MCF 10A (cell line): ENCODE measurements at regions of chr1 and their contacts with region 1.

Region 1: GRCh38 chr1:151728151-151729054 is 7.1 kb downstream of the RIIAD1 start:
- DNase-seq: no peak
- H3K4me3 Mint-ChIP-seq: no peak overlapping the region
- H3K27ac Mint-ChIP-seq: no peak overlapping the region
- H3K4me1 Mint-ChIP-seq: no peaks in the 10 kb centered on the region
- H3K27me3 Mint-ChIP-seq: peaks cover 27% of the 10 kb centered on the region
- CTCF ChIP-seq: no peak

Region 2: DNA sequence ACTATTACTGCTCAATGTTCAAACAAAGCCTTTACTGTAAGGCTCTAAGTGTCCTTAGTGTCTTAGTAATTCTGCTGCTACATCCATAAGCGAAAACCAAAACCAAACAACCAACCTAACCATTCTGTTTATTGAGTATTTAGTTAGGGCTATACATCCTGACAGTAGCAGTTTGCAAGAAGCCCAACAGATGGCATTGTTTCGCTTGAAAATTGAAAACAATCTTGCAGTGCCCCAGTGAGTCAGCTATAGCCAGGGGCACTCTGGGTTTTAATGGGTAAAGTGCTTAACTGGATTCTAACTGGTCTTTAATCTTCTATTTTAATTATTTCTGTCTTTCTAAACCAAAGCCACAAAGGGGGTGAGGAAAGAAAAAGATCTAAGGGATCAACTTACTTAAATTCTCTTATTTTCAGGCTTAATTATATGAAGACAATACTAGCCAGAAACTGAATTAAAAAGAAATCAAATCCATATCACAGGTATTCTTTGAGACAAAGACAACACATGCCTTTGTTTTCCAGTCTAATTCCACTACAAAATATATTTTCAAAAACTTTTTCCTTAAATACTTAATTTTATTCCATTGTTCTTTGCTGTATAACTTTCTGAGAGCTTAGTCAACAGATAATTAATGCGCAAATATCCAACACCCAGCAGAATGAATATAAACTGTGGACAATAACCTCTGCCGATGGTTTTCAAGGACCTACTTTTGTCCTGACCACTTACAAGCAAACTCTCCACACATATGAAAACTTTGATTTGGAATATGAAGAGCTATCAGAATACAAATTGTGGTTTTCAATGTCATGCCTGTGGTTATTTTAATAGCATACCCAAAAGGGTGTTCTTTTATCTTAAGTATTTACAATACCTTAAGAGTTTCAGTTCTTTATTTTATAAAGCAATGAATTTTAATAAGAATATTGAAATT is 284.3 kb before region 1 on chr1:
- CTCF ChIA-PET with region 1: interaction called, 25 read pairs
- POLR2A ChIA-PET with region 1: no interaction called
- intact Hi-C with region 1: no loop called
- DNase-seq: peak; percentile 94
- H3K4me3 Mint-ChIP-seq: no peak overlapping the region
- H3K27ac Mint-ChIP-seq: no peak overlapping the region
- H3K4me1 Mint-ChIP-seq: peaks cover 24% of the 10 kb centered on the region
- H3K27me3 Mint-ChIP-seq: no peaks in the 10 kb centered on the region
- CTCF ChIP-seq: peak; percentile 93

Region 3: DNA sequence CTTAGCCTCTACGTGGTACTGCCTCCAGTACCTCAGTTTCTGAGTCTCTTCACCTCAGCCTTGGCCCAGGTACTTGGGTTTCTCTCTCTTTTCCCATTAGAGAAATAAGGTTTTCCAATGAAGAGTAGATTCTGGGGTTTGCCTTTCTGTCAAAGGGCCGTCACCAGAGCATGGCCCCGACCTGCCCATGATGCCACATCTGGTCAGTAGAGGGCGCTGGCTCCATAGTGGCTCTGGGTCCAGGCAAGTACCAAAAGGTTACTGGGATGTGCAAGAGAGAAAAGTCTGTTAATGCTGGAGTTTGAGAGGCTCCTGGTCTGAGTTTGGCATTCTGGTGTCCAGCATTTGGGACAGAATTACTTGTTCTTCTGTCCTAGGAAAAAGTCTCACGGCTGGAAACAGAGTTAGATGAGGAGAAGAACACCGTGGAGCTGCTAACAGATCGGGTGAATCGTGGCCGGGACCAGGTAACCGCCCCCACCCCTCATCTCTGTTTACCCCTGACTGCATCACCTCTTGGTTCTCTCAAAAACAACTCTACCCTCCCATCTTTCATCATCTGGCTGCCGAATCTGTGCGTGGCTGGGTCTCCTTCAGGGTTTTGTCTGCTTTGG is 193.6 kb before region 1 on chr1:
- CTCF ChIA-PET with region 1: interaction called, 53 read pairs
- POLR2A ChIA-PET with region 1: no interaction called
- intact Hi-C with region 1: no loop called
- DNase-seq: peak; percentile 89
- H3K4me3 Mint-ChIP-seq: no peak overlapping the region
- H3K27ac Mint-ChIP-seq: no peak overlapping the region
- H3K4me1 Mint-ChIP-seq: peaks cover 28% of the 10 kb centered on the region
- H3K27me3 Mint-ChIP-seq: no peaks in the 10 kb centered on the region
- CTCF ChIP-seq: peak; percentile 95

Region 4: DNA sequence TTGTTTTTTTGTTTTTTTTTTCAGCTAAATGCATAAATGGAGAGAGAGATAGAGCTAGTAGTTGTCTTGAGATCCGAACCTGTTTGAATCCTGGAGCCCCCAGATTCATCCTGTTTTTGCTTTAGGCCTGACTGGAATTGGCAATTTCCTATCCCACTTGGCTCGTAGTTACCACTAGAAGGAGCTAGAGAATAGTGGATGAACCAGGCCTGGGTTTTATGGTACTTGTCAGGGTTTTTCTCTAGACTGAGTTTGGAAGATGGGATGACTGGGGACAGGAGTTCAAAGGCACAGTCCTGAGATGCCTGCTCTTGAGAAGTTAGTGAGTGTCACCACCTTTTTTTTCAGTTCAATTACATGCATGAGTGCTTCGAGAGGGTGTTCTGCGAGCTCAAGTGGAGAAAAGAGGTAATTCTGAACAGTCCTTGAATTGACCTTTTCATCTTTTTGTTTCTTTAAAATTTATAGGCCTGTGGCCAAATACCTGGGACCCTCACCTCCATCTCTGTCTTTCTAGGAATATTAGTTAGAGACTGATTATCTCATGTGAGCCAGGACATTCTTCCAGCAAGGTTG is 35.2 kb before region 1 on chr1:
- CTCF ChIA-PET with region 1: interaction called, 37 read pairs
- POLR2A ChIA-PET with region 1: no interaction called
- intact Hi-C with region 1: no loop called
- DNase-seq: peak; percentile 60
- H3K4me3 Mint-ChIP-seq: no peak overlapping the region
- H3K27ac Mint-ChIP-seq: peak overlapping the region; percentile 43
- H3K4me1 Mint-ChIP-seq: no peaks in the 10 kb centered on the region
- H3K27me3 Mint-ChIP-seq: no peaks in the 10 kb centered on the region
- CTCF ChIP-seq: peak; percentile 74

Region 5: DNA sequence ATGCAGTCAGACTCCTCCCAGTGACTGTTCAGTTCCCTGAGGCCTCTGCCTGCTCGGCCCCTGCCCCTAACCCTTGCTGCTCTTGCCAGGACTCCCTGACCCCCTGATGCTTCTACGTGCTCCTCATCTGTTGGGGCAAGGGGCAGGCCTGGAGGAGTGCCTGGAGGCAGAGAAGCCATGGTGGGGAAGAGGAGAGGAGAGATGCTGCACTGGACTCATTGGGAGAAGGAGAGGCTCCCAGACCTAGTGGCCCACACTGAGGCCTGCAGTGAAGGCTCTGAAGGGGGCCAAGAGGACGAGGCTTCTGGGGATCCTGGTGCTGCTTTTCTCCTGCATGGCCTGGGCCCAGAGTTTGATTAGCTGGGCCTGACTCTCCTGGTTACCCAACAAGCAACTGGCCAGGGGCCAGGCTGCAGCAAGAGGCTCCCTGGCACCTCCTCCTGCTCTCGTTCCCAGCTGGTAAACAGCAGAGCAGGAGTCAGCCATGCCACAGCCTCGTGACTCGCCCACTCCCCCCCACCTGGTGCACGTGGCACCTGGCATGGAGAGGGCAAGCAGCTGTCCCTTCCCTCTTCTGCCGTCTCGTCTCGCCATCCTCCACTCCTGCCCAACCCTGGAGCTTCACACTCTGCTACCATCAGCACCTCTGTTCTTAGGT is 104.0 kb after region 1 on chr1:
- CTCF ChIA-PET with region 1: interaction called, 26 read pairs
- POLR2A ChIA-PET with region 1: no interaction called
- intact Hi-C with region 1: no loop called
- DNase-seq: peak; percentile 95
- H3K4me3 Mint-ChIP-seq: peak overlapping the region; percentile 56
- H3K27ac Mint-ChIP-seq: peak overlapping the region; percentile 60
- H3K4me1 Mint-ChIP-seq: peaks cover 67% of the 10 kb centered on the region
- H3K27me3 Mint-ChIP-seq: no peaks in the 10 kb centered on the region
- CTCF ChIP-seq: no peak

Region 6: DNA sequence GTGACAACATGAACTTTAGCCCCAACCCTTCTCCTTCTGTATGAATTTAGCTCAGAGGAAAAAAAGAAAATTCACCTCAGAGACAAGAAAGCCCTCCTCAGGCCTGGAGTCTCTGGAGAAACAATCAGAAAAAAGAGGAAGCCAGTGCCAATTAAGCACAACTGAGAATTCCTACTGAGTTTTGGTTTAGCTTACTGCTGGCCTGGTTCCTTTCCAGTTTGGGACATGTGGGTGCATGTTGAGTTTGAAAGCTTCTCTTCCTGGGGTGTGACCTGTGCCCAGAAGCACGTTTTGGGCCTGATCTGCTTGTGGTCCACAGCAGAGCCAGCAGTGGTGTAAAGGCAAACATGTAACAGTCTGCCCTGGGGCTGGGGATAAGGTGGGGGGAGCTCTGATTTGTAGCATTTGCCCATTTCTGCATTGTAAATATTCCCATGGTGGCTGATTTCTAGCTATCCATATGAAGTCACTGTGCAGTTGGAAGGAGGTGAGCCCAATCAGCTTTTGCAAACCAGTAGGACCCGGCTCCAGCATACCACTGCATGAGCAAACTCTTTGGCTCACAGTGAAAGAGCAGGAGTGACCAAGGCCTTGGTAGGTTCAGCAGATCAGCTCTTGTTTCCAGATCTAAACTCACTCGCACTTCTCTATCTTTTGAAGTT is 129.8 kb after region 1 on chr1:
- CTCF ChIA-PET with region 1: no interaction called
- POLR2A ChIA-PET with region 1: no interaction called
- intact Hi-C with region 1: no loop called
- DNase-seq: peak; percentile 66
- H3K4me3 Mint-ChIP-seq: no peak overlapping the region
- H3K27ac Mint-ChIP-seq: peak overlapping the region; percentile 84
- H3K4me1 Mint-ChIP-seq: peaks cover 40% of the 10 kb centered on the region
- H3K27me3 Mint-ChIP-seq: no peaks in the 10 kb centered on the region
- CTCF ChIP-seq: no peak